Dorsolateral prefrontal cortex (tissue), 120 donors: ENCODE measurements at regions of chr11 and their contacts with region 1.

Region 1: DNA sequence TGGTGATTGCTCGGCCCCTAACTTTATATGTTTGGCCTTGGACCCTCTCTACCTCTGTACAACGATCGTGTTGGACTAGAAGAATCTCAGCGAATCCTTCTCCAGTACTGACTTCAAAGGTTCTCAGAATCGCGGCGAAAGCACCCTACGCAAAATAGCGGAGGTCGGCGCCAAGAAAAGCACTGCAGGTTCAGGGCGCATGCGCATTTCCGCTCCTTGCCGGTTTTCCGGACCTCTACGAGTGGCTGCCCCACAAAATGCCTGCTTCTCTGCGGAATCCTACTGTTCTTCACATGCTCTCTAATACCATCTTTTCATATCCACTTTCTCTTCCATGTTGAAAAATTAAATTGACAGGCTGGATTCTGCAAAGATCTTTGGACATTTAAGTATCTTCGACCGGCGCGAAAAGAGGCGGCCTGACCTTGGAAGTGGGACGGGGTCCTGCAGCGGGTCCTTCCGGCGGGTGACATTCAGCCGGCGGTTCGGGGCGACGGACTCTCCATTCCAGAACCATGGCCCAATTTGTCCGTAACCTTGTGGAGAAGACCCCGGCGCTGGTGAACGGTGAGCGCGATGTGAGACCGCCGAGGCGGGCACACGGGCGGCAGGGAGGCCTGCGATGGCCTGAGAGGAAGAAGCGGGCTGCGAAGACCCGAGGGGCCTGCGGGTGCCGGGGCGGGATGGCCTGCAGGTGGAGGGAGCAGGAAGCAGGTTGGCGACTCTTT is at the start of gene ATP5MG:
- DNase-seq: peak; percentile 82 to 91 (median 88)
- H3K4me3 ChIP-seq: peak within 1 kb of the TSS; percentile 61 to 100 (median 91)
- H3K27ac ChIP-seq: peak within 1 kb of the TSS; percentile 52 to 99 (median 95)
- H3K27me3 ChIP-seq: no peaks in the 10 kb centered on the region
- CTCF ChIP-seq: peak in 29 of 56 donors; percentile 8 to 44 (median 21)
- total RNA-seq, gene ATP5MG: 79.3 to 209 (median 146) TPM

Region 2: GRCh38 chr11:118359295-118359958 is 41.9 kb before region 1 on chr11 and contains the start of gene UBE4A:
- intact Hi-C with region 1: loop called (anchors 2 to 5 kb)
- DNase-seq: peak; percentile 91 to 96 (median 94)
- H3K4me3 ChIP-seq: peak within 1 kb of the TSS; percentile 54 to 99 (median 87)
- H3K27ac ChIP-seq: peak within 1 kb of the TSS in 46 of 59 donors; percentile 10 to 85 (median 54)
- H3K27me3 ChIP-seq: no peaks in the 10 kb centered on the region
- CTCF ChIP-seq: peak in 34 of 56 donors; percentile 4 to 62 (median 34)
- total RNA-seq, gene UBE4A: 41.4 to 68.0 (median 57.4) TPM

Region 3: GRCh38 chr11:118364956-118365615 is 36.2 kb before region 1 on chr11:
- intact Hi-C with region 1: loop called in 1 of 2 experiments (anchors 5 kb)
- DNase-seq: peak in 1 of 10 donors; percentile 64
- H3K4me3 ChIP-seq: no peak overlapping the region
- H3K27ac ChIP-seq: peak overlapping the region in 1 of 59 donors; percentile 83
- H3K27me3 ChIP-seq: no peaks in the 10 kb centered on the region
- CTCF ChIP-seq: no peak

Region 4: DNA sequence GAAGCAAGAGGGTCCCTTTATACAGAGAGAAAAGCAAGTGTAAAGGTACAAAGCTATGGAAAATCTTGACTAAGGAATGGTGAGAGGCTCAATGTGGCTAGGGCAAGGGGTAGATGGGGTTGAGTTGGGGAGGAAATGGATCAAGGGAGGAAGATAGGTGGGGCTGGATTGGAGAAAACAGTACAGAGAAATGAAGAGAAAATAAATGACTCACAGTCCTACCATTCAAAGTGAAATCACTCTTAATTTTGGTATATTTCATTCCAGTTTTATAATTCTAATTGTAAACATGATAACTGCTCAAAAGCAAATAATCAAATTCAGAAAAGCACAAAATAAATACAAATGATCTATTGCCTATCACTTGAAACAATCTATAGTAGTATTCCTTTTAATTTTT is 25.3 kb before region 1 on chr11:
- intact Hi-C with region 1: no loop called
- DNase-seq: no peak
- H3K4me3 ChIP-seq: no peak overlapping the region
- H3K27ac ChIP-seq: no peak overlapping the region
- H3K27me3 ChIP-seq: no peaks in the 10 kb centered on the region
- CTCF ChIP-seq: no peak